ENCODE measurements at regions of chr14 and their contacts with region 1.

Region 1: DNA sequence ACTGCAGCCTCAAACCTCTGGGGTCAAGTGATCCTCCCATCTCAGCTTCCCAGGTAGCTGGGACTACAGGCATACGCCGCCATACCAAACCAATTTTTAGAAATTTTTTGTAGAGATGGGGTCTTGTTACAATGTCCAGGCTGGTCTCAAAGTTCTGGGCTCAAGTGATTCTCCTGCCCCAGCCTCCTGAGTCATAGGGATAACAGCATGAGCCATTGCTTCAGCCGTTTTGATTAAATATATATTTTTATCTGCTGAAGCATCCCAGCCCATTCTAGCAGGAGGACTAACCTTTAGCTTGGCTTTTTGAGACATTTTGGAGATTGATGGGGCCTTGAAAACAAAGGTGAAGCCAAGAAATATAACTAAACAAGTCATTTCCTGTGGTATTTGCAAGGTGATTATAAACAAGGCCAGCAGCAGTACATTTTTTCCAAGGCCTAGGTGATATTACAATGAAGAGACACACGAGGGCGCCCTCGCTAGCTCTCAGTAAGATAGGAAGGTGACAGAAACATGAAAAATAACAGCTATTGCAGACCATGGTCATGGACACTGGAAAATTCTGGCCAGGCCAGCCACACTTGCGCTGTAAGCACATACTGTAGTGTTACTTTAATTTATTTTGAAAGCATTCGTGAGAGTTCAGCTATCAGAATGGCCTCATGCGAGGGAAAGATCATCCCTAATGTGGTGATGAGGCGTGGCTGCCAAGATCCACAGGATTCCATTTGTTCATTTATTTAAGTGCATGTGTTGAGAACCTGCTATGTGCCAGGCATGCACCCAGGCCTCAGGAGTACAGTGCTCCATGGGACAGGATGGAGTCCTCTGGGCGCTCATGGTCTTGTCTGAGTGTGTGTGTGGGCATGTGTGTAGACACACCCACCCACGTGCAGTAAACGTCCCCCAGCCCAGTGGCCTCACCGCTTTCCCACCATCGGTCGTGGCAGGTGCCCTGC is 63.5 kb downstream of the DGLUCY start:
- DNase-seq: peak; percentile 70 to 83 (median 78)
- H3K4me3 ChIP-seq: no peak overlapping the region
- H3K27ac ChIP-seq: peak overlapping the region in 1 of 2 experiments; percentile 47
- H3K4me1 ChIP-seq: peaks cover 0 to 4% (median 0%) of the 10 kb centered on the region in 4 experiments
- H3K27me3 ChIP-seq: no peaks in the 10 kb centered on the region

Region 2: GRCh38 chr14:90894241-90894640 is 283.1 kb before region 1 on chr14:
- CTCF ChIA-PET with region 1: interaction called, 12 read pairs
- POLR2A ChIA-PET with region 1: no interaction called
- DNase-seq: no peak
- H3K4me3 ChIP-seq: no peak overlapping the region
- H3K27ac ChIP-seq: no peak overlapping the region
- H3K4me1 ChIP-seq: no peaks in the 10 kb centered on the region
- H3K27me3 ChIP-seq: no peaks in the 10 kb centered on the region

Region 3: DNA sequence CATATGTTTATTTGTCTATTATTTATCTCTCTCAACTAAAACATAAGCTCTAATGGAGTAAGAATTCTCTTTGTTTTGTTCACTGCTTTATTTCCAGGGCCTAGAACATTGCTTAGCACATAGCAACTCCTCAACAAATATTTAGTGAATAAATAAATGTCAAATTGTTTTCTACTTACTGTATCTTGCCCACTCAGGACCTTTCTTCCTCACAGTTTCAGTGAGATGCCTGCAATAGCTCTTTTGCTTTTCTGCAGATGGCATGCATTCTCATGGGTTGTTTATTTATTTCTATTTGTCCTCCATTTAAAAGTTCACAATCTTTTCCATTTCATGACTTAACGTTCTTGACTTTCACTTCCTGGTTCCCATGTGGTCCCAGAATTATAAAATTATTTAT is 266.2 kb before region 1 on chr14:
- CTCF ChIA-PET with region 1: interaction called, 16 read pairs
- POLR2A ChIA-PET with region 1: no interaction called
- DNase-seq: no peak
- H3K4me3 ChIP-seq: no peak overlapping the region
- H3K27ac ChIP-seq: no peak overlapping the region
- H3K4me1 ChIP-seq: peaks cover 4 to 10% (median 6%) of the 10 kb centered on the region in 4 experiments
- H3K27me3 ChIP-seq: no peaks in the 10 kb centered on the region

Region 4: DNA sequence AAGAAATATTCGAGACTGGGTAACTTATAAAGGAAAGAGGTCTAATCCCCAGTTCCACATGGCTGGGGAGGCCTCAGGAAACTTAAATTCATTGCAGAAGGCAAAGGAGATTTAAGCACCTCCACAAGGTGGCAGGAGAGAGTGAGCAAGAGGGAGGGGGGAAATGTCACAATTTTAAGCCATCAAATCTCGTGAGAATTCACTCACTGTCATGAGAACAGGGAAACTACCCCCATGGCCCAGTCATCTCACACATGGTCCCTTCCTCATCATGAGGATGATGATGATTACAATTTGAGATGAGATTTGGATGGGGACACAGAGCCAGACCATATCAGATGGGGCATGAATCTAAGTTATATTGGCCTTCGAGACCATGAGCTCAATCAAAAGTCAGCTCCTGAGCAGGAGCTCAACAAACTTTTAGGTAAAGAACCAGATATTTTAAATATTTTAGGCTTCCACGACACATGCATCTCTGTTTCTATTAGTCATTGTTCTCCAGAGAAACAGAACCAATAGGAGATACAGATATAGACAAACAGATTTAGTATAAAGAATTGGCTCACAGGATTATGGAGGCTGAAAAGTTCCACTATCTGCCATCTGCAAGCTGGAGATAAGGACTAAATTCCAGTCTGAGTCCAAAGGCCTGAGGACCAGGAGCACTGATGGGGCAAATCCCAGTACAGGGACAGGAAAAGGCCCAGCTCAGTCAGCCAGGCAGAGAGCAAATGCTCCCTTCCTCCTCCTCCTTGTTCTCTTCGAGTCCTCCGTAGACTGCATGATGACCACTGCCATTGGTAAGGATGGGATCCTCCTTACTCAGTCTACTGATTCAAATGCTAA is 38.6 kb before region 1 on chr14:
- CTCF ChIA-PET with region 1: interaction called, 39 read pairs
- POLR2A ChIA-PET with region 1: interaction called, 3 read pairs
- DNase-seq: peak; percentile 74 to 86 (median 81)
- H3K4me3 ChIP-seq: no peak overlapping the region
- H3K27ac ChIP-seq: no peak overlapping the region
- H3K4me1 ChIP-seq: peaks cover 6 to 27% (median 21%) of the 10 kb centered on the region in 4 experiments
- H3K27me3 ChIP-seq: no peaks in the 10 kb centered on the region

Region 5: GRCh38 chr14:91154851-91155625 is 22.3 kb before region 1 on chr14:
- CTCF ChIA-PET with region 1: interaction called, 66 read pairs
- POLR2A ChIA-PET with region 1: no interaction called
- DNase-seq: peak; percentile 60 to 87 (median 86)
- H3K4me3 ChIP-seq: no peak overlapping the region
- H3K27ac ChIP-seq: peak overlapping the region in 1 of 2 experiments; percentile 21
- H3K4me1 ChIP-seq: peaks cover 0 to 23% (median 12%) of the 10 kb centered on the region in 4 experiments
- H3K27me3 ChIP-seq: no peaks in the 10 kb centered on the region

Region 6: GRCh38 chr14:91228112-91229004 is 51.0 kb after region 1 on chr14:
- CTCF ChIA-PET with region 1: interaction called, 10 read pairs
- POLR2A ChIA-PET with region 1: no interaction called
- DNase-seq: peak in 2 of 3 donors; percentile 48 to 53
- H3K4me3 ChIP-seq: no peak overlapping the region
- H3K27ac ChIP-seq: no peak overlapping the region
- H3K4me1 ChIP-seq: peaks cover 14 to 53% (median 16%) of the 10 kb centered on the region in 4 experiments
- H3K27me3 ChIP-seq: peaks cover 0 to 43% (median 8%) of the 10 kb centered on the region in 5 experiments

Region 7: GRCh38 chr14:91286530-91286937 is 109.2 kb after region 1 on chr14:
- CTCF ChIA-PET with region 1: interaction called, 170 read pairs
- POLR2A ChIA-PET with region 1: no interaction called
- DNase-seq: peak; percentile 73 to 83 (median 73)
- H3K4me3 ChIP-seq: no peak overlapping the region
- H3K27ac ChIP-seq: no peak overlapping the region
- H3K4me1 ChIP-seq: peaks cover 0 to 10% (median 1%) of the 10 kb centered on the region in 4 experiments
- H3K27me3 ChIP-seq: no peaks in the 10 kb centered on the region

Measured in common myeloid progenitor, CD34-positive (primary cell).